ENCODE measurements at regions of chr4 and their contacts with region 1.

Region 1: DNA sequence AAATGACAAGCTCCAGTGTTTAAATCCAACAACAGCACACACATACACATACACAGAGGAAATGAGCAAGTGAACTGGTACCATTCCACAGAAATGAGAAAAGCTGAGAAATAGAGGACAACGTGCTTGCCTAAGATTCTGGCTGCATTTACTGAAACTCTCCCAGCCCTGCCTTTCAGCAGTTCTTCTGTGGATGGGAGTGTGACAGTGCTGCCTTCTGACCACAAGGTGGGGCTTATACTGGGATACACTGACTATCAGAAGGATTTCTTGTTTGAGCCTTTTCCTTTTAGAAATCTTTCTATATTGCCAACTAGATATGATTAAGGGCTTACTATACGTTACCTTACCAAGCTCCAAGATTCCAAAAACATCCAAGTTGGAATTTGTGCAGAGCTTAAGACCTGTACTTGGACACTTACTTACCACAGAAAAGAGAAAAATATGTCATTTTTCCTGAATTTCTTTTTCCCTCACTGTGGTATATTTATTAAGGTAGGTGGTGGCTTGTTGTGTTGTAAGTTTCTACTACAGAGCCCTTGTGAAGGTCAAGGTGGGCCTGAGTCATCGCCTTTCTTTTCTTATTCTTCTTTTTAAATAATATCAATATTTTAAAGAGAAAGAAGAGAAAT is 10.7 kb upstream of the CXCL8 start:
- DNase-seq: peak in 1 of 2 donors; percentile 87
- H3K4me3 ChIP-seq: no peak overlapping the region
- H3K27ac ChIP-seq: no peak overlapping the region
- H3K4me1 ChIP-seq: no peaks in the 10 kb centered on the region
- H3K27me3 ChIP-seq: no peaks in the 10 kb centered on the region
- CTCF ChIP-seq: peak; percentile 58 to 77 (median 74)

Region 2: DNA sequence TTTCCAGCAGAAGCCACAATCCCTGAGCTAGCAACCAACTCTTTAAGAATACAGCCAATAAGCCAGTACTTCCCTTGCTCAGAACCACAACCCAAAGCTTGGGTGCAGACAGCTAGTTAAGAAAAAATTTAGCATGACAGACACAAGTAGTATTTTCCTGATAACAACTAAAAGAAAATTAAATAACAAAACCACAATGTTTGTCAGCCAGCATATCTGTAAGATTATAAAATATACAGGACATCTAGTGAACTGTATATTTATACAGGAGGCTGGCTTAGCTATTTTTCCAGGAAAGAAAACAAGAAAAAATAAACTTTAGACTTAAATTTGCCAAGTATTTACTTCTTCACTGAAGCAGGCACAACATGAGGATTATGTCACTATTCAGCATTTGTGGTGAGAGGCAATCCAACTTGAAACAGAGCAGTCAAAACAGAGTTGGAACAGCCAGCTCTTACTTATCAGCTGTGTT is 130.0 kb after region 1 on chr4:
- intact Hi-C with region 1: loop called (anchors 5 kb)
- DNase-seq: no peak
- H3K4me3 ChIP-seq: no peak overlapping the region
- H3K27ac ChIP-seq: no peak overlapping the region
- H3K4me1 ChIP-seq: no peaks in the 10 kb centered on the region
- H3K27me3 ChIP-seq: no peaks in the 10 kb centered on the region
- CTCF ChIP-seq: no peak

Measured in ascending aorta (tissue), 2 donors.